Activated CD4-positive, alpha-beta T cell treated with anti-CD3 and anti-CD28 coated beads, Interleukin-2, amount 10 ng/mL, durations not matched to agents 24 days and 14 days (primary cell): ENCODE measurements at regions of chr11 and their contacts with region 1.

Region 1: GRCh38 chr11:15819679-15820286 is 536.6 kb downstream of the SOX6 start:
- DNase-seq: peak; percentile 79
- H3K4me3 Mint-ChIP-seq: no peak overlapping the region
- H3K27ac Mint-ChIP-seq: peak overlapping the region; percentile 29
- H3K4me1 Mint-ChIP-seq: peaks cover 5% of the 10 kb centered on the region
- H3K27me3 Mint-ChIP-seq: no peaks in the 10 kb centered on the region

Region 2: DNA sequence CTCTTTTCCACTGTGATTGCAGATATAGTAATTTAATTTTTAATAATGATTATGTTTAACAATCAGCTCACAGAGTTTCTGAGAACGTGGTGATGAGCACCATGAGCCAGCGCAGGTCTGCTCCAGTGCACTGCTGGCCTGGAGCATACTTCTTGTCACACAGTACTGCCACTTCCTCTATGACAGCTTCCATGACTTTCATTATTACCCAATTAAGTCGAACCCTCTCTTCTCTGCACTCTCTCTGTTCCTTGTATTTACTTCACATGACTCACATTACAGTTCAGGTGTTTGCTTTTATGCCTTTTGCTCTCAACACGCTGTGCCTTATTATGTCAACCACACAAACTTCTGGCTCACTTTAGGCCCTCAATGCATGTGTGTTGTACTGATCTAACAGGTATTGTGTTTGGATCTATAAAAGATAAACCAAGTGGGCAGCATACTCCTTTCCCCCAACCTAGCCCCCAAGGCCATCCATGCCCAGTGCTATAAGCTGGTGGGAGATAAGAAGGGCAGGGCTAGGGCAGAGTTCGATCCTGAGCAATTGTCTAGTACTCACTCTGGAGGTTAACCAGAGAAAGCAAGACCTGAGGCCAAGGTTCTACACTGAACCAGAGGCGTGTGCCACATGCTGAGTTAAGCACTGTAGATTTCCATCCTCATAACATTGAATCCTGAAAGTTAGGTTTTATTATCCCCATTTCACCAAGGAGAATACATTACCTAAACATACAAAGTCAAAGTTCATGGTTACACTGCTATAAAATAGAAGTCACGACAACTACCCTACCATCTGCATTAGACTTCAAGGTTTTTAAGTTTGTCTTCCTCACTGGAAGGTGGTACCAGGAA is 348.5 kb before region 1 on chr11:
- intact Hi-C with region 1: no loop called
- DNase-seq: no peak
- H3K4me3 Mint-ChIP-seq: no peak overlapping the region
- H3K27ac Mint-ChIP-seq: no peak overlapping the region
- H3K4me1 Mint-ChIP-seq: no peaks in the 10 kb centered on the region
- H3K27me3 Mint-ChIP-seq: no peaks in the 10 kb centered on the region

Region 3: GRCh38 chr11:15650105-15650938 is 169.5 kb before region 1 on chr11:
- intact Hi-C with region 1: loop called (anchors 5 kb)
- DNase-seq: peak; percentile 93
- H3K4me3 Mint-ChIP-seq: no peak overlapping the region
- H3K27ac Mint-ChIP-seq: no peak overlapping the region
- H3K4me1 Mint-ChIP-seq: no peaks in the 10 kb centered on the region
- H3K27me3 Mint-ChIP-seq: peaks cover 23% of the 10 kb centered on the region

Region 4: GRCh38 chr11:15730617-15731385 is 89.0 kb before region 1 on chr11:
- intact Hi-C with region 1: no loop called
- DNase-seq: no peak
- H3K4me3 Mint-ChIP-seq: no peak overlapping the region
- H3K27ac Mint-ChIP-seq: no peak overlapping the region
- H3K4me1 Mint-ChIP-seq: no peaks in the 10 kb centered on the region
- H3K27me3 Mint-ChIP-seq: peaks cover 2% of the 10 kb centered on the region

Region 5: DNA sequence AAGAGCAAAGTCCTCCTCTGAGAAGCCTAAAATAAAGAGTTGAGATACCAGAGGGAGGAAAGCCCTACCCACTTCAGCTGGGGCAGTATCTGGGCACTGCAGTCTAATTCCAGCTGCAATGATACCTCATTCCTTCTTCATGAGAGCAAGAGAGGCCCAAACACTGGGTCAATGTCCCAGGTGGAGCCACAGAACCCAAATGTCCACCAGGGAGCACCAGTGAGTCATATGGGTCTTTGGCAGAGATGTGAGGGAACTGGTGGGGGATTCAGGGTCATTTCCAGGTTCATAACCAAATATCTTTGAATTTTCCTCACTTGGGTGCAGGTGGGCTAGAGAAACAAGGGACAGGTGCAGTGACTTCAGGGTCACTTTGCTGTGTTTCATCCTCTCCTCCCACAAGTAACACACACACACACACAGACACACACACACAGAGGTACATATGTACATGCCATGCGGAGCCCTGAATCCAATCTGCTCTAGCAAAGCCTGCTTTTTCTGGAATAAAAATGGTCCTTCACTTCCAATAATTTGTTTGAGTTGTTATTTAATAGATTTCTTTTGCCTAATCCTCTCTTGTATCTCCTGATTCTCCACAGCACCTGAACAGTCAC is 48.9 kb before region 1 on chr11:
- intact Hi-C with region 1: no loop called
- DNase-seq: peak; percentile 61
- H3K4me3 Mint-ChIP-seq: no peak overlapping the region
- H3K27ac Mint-ChIP-seq: no peak overlapping the region
- H3K4me1 Mint-ChIP-seq: no peaks in the 10 kb centered on the region
- H3K27me3 Mint-ChIP-seq: no peaks in the 10 kb centered on the region

Region 6: GRCh38 chr11:15801616-15802015 is 18.2 kb before region 1 on chr11:
- intact Hi-C with region 1: loop called (anchors 1 kb)
- DNase-seq: no peak
- H3K4me3 Mint-ChIP-seq: no peak overlapping the region
- H3K27ac Mint-ChIP-seq: peak overlapping the region; percentile 68
- H3K4me1 Mint-ChIP-seq: peaks cover 4% of the 10 kb centered on the region
- H3K27me3 Mint-ChIP-seq: no peaks in the 10 kb centered on the region